HepG2 (cell line): ENCODE measurements at regions of chr12 and their contacts with region 1.

Region 1: GRCh38 chr12:57621497-57622292 is 10.5 kb downstream of the ARHGEF25 start:
- DNase-seq: no peak
- ATAC-seq: peak; percentile 80
- H3K4me3 ChIP-seq: peak overlapping the region; percentile 31 to 70 (median 37)
- H3K27ac ChIP-seq: no peak overlapping the region
- H3K4me1 ChIP-seq: peaks cover 47% of the 10 kb centered on the region
- H3K27me3 ChIP-seq: peaks cover 16 to 50% of the 10 kb centered on the region in 2 experiments
- CTCF ChIP-seq: peak; percentile 98
- EP300 ChIP-seq: no peak
- POLR2A ChIP-seq: no peak
- RAD21 ChIP-seq: peak; percentile 92

Region 2: DNA sequence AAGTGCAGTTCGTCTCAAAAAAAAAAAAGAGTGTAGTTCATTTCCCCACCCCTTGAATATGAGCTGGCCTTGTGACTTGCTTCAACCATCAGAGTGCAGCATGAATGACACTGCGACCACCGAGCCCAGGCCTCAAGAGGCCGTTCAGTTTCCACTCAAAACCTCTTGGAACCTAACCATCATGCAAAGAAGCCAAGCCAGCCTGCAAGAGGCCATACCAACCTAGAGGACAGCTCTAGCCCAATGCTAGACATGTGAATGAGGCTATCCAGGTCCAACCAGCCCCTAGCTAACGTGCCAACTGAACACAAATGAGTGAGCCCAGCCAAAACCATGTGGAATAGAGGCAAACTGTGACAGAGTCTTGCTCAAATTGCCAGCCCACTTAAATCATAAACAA is 220.5 kb before region 1 on chr12:
- CTCF ChIA-PET with region 1: no interaction called
- POLR2A ChIA-PET with region 1: no interaction called
- in situ Hi-C with region 1: no loop called
- intact Hi-C with region 1: no loop called
- DNase-seq: no peak
- ATAC-seq: no peak
- H3K4me3 ChIP-seq: no peak overlapping the region
- H3K27ac ChIP-seq: no peak overlapping the region
- H3K4me1 ChIP-seq: no peaks in the 10 kb centered on the region
- H3K27me3 ChIP-seq: no peaks in the 10 kb centered on the region
- CTCF ChIP-seq: no peak
- EP300 ChIP-seq: no peak
- POLR2A ChIP-seq: no peak
- RAD21 ChIP-seq: no peak

Region 3: DNA sequence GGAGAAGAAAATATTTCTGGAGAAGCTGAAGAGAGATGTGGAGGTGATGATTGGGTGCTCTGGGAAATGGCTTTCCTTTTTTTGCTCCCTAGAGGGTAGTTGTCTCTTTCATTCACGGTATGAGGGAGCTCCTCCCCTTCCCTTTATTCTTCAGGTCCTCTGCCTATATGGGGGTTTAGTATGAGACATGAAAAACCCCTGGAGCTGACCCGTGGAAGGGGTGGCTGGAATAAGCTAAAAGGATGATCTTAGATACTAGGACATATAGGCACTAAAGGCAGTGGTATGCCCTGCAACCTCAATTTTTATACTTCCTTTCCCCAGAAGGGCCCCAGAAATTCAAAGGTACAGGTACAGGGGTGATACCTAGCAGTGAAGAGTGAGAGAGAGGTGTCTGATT is 21.3 kb before region 1 on chr12:
- CTCF ChIA-PET with region 1: no interaction called
- POLR2A ChIA-PET with region 1: no interaction called
- in situ Hi-C with region 1: no loop called
- intact Hi-C with region 1: no loop called
- DNase-seq: no peak
- ATAC-seq: no peak
- H3K4me3 ChIP-seq: no peak overlapping the region
- H3K27ac ChIP-seq: no peak overlapping the region
- H3K4me1 ChIP-seq: peaks cover 16% of the 10 kb centered on the region
- H3K27me3 ChIP-seq: peaks cover 0 to 4% of the 10 kb centered on the region in 2 experiments; a peak in 1 of 5 replicates
- CTCF ChIP-seq: no peak
- EP300 ChIP-seq: no peak
- POLR2A ChIP-seq: no peak
- RAD21 ChIP-seq: no peak

Region 4: DNA sequence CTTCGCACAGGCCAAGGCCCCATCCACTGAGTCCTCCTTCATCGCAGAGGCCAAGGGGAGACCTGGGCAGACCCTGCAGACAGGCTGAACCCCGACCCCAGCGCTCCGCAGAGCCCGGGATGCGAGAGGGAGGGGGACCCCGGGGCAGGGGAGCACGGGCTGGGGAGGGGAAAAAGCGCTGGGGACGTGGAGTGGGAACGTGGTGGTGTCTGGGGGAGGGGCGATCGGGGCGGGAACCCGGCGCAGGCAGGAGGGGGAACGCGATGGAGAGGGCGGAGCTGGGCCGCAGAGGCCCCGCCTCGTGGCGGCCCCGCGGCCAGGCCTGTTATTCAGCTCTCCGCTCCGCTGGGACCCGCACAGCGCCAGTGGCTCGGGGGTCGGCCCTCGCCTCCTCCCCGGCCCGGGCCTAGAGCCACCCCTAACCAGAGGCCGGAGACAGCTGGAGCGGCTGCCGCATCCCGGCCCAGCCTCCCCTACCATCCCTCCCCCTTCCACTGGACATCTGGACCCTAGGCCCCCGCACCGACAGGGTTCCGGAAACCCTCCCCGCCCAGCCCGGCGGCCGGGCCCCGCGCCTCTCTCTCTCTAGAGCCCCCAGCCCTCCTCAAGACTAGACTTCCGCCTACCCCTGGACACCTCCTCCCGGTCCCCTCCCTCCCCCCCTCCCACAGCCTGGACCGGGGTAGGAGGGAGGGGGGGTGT is 10.4 kb before region 1 on chr12 and contains the start of gene ARHGEF25:
- CTCF ChIA-PET with region 1: no interaction called
- POLR2A ChIA-PET with region 1: interaction called, 14 read pairs
- in situ Hi-C with region 1: no loop called
- intact Hi-C with region 1: no loop called
- DNase-seq: peak; percentile 41
- ATAC-seq: peak; percentile 80
- H3K4me3 ChIP-seq: peak within 1 kb of the TSS; percentile 71 to 78 (median 76)
- H3K27ac ChIP-seq: peak within 1 kb of the TSS; percentile 22
- H3K4me1 ChIP-seq: peaks cover 34% of the 10 kb centered on the region
- H3K27me3 ChIP-seq: peaks cover 0 to 19% of the 10 kb centered on the region in 2 experiments; a peak in 2 of 5 replicates
- CTCF ChIP-seq: peak; percentile 22; the same call in 1 of the 2 replicates
- EP300 ChIP-seq: no peak
- POLR2A ChIP-seq: peak; percentile 49 to 80; a peak in 3 of 4 replicates
- RAD21 ChIP-seq: no peak
- total RNA-seq, gene ARHGEF25: 10.1 and 11.5 TPM in 2 replicates